Activated T-helper 2 cell treated with anti-CD3 and anti-CD28 coated beads, Interferon-gamma antibody, Interleukin-2, Interleukin-4, amounts not matched to agents 10 μg/mL and 5 μg/mL and 100 μg/mL, durations not matched to agents 14 hours and 24 hours and 36 hours (primary cell): ENCODE measurements at regions of chr6 and their contacts with region 1.

Region 1: DNA sequence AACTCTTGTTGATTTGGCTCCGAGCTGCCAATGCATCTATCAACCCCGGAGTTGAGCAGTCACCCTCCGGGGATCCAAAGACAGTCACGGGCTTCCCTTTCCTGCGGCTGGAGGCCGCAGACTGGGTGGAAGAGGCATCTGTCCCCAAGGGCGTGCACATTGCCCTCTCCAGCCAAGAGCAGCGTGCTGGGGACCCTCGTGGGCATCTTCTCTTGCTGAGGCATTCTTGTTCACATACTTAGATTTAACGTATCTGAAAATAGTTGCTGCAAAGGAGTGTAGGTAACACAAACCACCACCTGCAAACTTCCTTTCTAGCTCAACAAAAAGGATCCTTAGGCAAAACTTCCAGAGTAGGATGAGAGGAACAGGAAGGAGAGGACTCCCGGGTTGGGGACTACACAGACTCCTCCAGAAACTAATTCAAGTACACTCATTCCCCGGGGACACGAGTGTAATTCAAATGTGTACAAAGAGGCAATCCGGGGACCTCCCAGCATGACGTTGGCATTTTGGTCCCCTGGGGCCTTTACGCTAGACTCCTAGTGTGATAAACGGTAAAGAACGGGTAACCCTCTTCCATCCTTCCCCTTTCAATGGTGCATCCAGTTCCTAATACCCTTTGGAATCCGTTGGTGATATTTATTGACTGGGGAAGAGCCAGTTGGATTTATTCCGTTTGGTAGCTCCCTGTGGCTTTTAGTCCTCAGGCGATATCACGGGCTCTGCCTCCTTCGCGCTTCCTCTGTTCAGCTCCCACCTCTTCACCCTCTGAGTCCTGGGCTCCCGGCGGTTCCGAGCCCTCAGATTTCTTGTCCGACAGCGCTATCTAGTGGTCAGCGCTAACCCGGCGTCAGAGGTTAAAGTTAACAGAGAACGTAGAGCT is 2.7 kb upstream of the COL12A1 start:
- DNase-seq: peak; percentile 70
- H3K4me3 Mint-ChIP-seq: peak overlapping the region; percentile 54
- H3K27ac Mint-ChIP-seq: no peak overlapping the region
- H3K4me1 Mint-ChIP-seq: peaks cover 45% of the 10 kb centered on the region
- H3K27me3 Mint-ChIP-seq: peaks cover 72% of the 10 kb centered on the region

Region 2: DNA sequence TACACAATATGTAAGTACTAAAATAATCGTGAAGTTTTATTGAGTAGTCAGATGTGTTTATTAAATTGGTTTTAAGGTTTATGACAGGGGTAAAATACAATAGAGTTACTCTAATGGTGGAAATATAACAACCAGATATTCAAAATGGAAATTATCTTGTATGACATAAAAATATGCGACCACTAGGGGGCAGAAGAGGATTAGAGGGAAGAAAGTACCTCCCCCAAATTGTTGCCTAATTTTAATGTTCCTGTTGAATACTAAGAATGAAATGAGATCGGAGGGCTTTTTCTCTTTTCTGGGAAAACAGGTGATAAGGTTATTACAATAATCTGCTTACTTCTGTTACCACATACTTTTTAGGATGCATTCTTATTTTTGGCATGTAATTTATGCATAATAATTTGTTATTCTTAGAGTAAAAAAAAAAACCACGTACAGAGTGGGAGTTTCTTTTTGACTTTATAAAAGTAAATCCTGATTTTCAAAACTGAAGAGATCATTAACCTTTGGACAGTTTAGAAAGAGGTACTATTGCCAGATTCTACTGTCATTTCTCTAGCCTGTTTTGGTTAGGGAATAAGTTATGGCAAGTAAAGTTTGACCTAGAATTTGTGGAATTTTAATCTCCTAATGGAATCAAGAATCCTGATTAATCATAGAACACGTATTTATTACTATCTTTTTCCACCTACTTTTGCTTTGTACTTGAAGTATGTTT is 1353.4 kb before region 1 on chr6:
- intact Hi-C with region 1: loop called (anchors 2 kb)
- DNase-seq: no peak
- H3K4me3 Mint-ChIP-seq: no peak overlapping the region
- H3K27ac Mint-ChIP-seq: no peak overlapping the region
- H3K4me1 Mint-ChIP-seq: no peaks in the 10 kb centered on the region
- H3K27me3 Mint-ChIP-seq: no peaks in the 10 kb centered on the region

Region 3: GRCh38 chr6:74091136-74091793 is 1117.3 kb before region 1 on chr6:
- intact Hi-C with region 1: loop called (anchors 1 kb)
- DNase-seq: no peak
- H3K4me3 Mint-ChIP-seq: no peak overlapping the region
- H3K27ac Mint-ChIP-seq: no peak overlapping the region
- H3K4me1 Mint-ChIP-seq: no peaks in the 10 kb centered on the region
- H3K27me3 Mint-ChIP-seq: no peaks in the 10 kb centered on the region

Region 4: DNA sequence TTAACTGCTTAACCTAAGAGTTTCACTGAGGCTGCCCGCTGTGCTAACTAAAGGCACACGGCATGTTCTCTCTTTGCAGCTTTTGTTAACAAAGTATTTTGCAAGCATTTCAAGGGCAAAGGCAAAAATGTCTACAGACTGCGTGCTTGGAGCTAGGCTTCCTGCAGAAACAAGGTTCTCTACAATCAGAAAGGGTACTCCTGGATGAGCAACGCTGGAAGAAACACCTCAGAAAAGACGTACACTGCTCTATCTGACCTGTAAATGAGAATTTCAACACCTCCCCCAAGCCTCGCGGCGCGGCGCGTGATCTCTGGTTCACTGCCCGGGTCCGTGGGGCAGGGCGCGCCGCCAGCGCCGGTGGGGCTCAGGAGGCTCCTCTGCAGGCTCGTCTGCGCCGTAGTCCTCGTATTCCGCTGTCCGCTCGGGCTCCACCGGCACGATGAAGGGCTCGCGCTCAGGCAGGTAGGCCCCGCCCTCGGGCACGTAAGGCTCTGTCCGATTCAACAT is 123.6 kb before region 1 on chr6:
- intact Hi-C with region 1: loop called (anchors 2 kb)
- DNase-seq: no peak
- H3K4me3 Mint-ChIP-seq: no peak overlapping the region
- H3K27ac Mint-ChIP-seq: no peak overlapping the region
- H3K4me1 Mint-ChIP-seq: peaks cover 2% of the 10 kb centered on the region
- H3K27me3 Mint-ChIP-seq: peaks cover 20% of the 10 kb centered on the region

Region 5: DNA sequence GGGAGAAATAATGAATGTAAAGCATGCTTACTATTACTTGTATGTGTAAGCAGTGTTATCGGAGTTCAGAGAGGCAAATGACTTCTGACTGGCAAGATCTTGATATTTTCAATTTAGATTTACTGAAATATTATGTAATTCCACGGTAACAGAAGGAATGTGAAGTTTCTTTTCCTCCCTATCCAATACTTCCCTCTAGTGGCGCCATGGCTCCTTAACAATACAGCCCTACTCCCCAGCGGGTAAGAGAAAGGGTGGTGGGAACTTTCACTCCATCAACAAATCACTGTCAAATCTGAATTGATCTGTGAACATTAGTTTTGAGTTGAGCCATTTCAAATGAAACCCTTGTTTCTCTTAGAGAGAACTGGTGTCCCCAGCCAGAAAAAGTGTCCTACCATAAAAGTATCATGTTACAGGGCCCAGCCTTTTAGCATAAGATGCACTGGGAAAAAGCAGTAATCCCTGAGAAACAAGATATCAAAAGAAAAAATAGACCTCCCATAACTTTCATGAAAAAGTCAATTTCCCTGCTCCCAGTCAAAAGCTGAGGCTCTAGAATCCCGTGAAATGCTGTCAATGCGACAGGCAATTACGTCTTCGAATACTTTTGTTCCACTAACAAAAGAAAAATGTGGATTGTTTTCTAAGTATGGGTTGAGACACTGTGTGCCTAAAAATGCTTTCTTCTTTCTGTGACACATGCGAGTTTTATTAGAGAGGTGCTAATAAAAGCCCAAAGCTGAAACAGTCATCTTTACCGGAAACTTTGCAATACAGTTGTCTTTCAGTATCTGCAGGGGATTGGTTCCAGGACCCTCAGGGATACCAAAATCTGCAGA is 22.2 kb after region 1 on chr6:
- intact Hi-C with region 1: no loop called
- DNase-seq: no peak
- H3K4me3 Mint-ChIP-seq: no peak overlapping the region
- H3K27ac Mint-ChIP-seq: no peak overlapping the region
- H3K4me1 Mint-ChIP-seq: no peaks in the 10 kb centered on the region
- H3K27me3 Mint-ChIP-seq: peaks cover 8% of the 10 kb centered on the region